ENCODE measurements at regions of chr5 and their contacts with region 1.

Region 1: GRCh38 chr5:93596676-93597461 is 13.8 kb downstream of the NR2F1 start:
- DNase-seq: no peak
- H3K4me3 ChIP-seq: peak overlapping the region in 3 of 4 experiments; percentile 13 to 47 (median 15); a peak in 5 of 8 replicates
- H3K27ac ChIP-seq: no peak overlapping the region
- H3K4me1 ChIP-seq: peaks cover 5 to 28% (median 18%) of the 10 kb centered on the region in 4 experiments
- H3K27me3 ChIP-seq: peaks cover 94 to 100% (median 97%) of the 10 kb centered on the region in 4 experiments
- CTCF ChIP-seq: peak; percentile 31 to 49 (median 42)
- EP300 ChIP-seq: no peak
- POLR2A ChIP-seq: no peak
- RAD21 ChIP-seq: peak; percentile 61 to 69

Region 2: DNA sequence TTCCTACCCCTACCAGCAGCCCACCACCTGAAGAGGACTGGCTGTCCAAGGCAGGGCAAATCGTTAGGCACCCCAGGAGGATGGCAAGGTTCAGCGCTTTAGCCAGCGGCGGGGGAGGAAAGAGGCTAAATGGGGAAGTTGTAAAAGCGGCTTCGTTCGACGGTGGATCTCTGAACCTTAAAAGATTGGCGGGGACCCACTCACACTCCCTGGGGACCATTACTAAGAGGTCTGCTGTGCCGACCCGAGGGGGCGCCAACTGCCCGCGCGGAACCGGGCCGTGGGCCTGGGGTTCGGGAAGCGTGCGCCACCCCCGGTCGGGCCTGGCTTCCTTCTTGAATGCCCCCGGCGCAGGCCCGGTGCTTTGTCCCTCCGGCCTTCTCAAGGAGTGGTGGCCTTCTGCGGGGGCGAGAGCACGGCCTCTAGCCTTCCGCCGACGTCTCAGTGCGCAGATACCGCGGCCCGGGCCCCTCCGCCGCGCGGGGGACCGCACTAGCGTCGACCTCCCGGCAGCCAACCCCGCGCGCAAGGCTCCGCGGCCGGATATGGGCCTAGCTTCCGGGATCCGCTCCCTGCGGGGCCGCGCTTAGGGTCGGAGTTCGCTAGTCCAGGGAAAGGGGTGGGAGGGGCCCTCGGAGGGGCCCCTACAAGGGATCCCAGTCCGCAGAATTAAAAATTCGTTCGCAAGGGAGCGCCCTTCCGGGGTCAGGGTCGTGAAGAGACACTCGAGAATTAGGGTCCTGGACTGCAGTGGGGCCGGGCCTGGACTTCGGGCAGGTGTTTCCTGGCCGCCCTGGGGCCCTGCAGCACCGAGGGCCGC is 26.4 kb before region 1 on chr5:
- CTCF ChIA-PET with region 1: interaction called, 12 read pairs
- POLR2A ChIA-PET with region 1: interaction called, 4 read pairs
- DNase-seq: peak in 1 of 2 experiments; percentile 82
- H3K4me3 ChIP-seq: peak overlapping the region; percentile 16 to 59 (median 30)
- H3K27ac ChIP-seq: no peak overlapping the region
- H3K4me1 ChIP-seq: peaks cover 10 to 27% (median 17%) of the 10 kb centered on the region in 4 experiments
- H3K27me3 ChIP-seq: peaks cover 56 to 74% (median 73%) of the 10 kb centered on the region in 4 experiments
- CTCF ChIP-seq: peak in 1 of 3 experiments; percentile 8; a peak in 1 of 4 replicates
- EP300 ChIP-seq: no peak
- POLR2A ChIP-seq: no peak
- RAD21 ChIP-seq: no peak

Region 3: GRCh38 chr5:93717162-93717561 is 120.3 kb after region 1 on chr5:
- CTCF ChIA-PET with region 1: no interaction called
- POLR2A ChIA-PET with region 1: no interaction called
- DNase-seq: no peak
- H3K4me3 ChIP-seq: no peak overlapping the region
- H3K27ac ChIP-seq: no peak overlapping the region
- H3K4me1 ChIP-seq: no peaks in the 10 kb centered on the region
- H3K27me3 ChIP-seq: no peaks in the 10 kb centered on the region
- CTCF ChIP-seq: no peak
- EP300 ChIP-seq: no peak
- POLR2A ChIP-seq: no peak
- RAD21 ChIP-seq: no peak

Region 4: GRCh38 chr5:93748875-93749397 is 152.1 kb after region 1 on chr5:
- CTCF ChIA-PET with region 1: no interaction called
- POLR2A ChIA-PET with region 1: no interaction called
- DNase-seq: no peak
- H3K4me3 ChIP-seq: no peak overlapping the region
- H3K27ac ChIP-seq: no peak overlapping the region
- H3K4me1 ChIP-seq: no peaks in the 10 kb centered on the region
- H3K27me3 ChIP-seq: no peaks in the 10 kb centered on the region
- CTCF ChIP-seq: no peak
- EP300 ChIP-seq: no peak
- POLR2A ChIP-seq: no peak
- RAD21 ChIP-seq: no peak

Measured in H1 (cell line).